ENCODE measurements at regions of chr6 and their contacts with region 1.

Region 1: GRCh38 chr6:168956884-168957730 is 296.5 kb downstream of the THBS2 start:
- DNase-seq: peak; percentile 37 to 59
- ATAC-seq: peak; percentile 78 to 83
- H3K4me3 ChIP-seq: no peak overlapping the region
- H3K27ac ChIP-seq: no peak overlapping the region
- H3K4me1 ChIP-seq: peaks cover 12 to 16% of the 10 kb centered on the region in 2 donors
- H3K27me3 ChIP-seq: peaks cover 0 to 11% (median 4%) of the 10 kb centered on the region in 3 donors
- CTCF ChIP-seq: peak; percentile 62 to 77 (median 72)
- POLR2A ChIP-seq: no peak

Region 2: GRCh38 chr6:169520104-169520503 is 563.0 kb after region 1 on chr6:
- in situ Hi-C with region 1: loop called in 1 of 4 experiments (anchors 25 kb)
- intact Hi-C with region 1: no loop called
- DNase-seq: no peak
- ATAC-seq: no peak
- H3K4me3 ChIP-seq: no peak overlapping the region
- H3K27ac ChIP-seq: no peak overlapping the region
- H3K4me1 ChIP-seq: no peaks in the 10 kb centered on the region
- H3K27me3 ChIP-seq: no peaks in the 10 kb centered on the region
- CTCF ChIP-seq: no peak
- POLR2A ChIP-seq: no peak

Region 3: GRCh38 chr6:169654598-169655391 is 697.7 kb after region 1 on chr6:
- in situ Hi-C with region 1: no loop called
- intact Hi-C with region 1: loop called (anchors 10 kb)
- DNase-seq: peak; percentile 32 to 56
- ATAC-seq: peak; percentile 84 to 93
- H3K4me3 ChIP-seq: peak overlapping the region; percentile 42 to 60 (median 54)
- H3K27ac ChIP-seq: peak overlapping the region; percentile 68 to 75 (median 72)
- H3K4me1 ChIP-seq: no peaks in the 10 kb centered on the region
- H3K27me3 ChIP-seq: no peaks in the 10 kb centered on the region
- CTCF ChIP-seq: peak in 2 of 5 experiments; percentile 10 to 21
- POLR2A ChIP-seq: peak in 1 of 2 donors; percentile 38

Measured in gastrocnemius medialis (tissue), 4 donors.